Mammary epithelial cell (primary cell): ENCODE measurements at regions of chr7 and their contacts with region 1.

Region 1: GRCh38 chr7:93890464-93891068 is at the start of gene TFPI2:
- DNase-seq: peak; percentile 93
- H3K4me3 ChIP-seq: peak within 1 kb of the TSS; percentile 72 to 78 (median 77)
- H3K27ac ChIP-seq: peak within 1 kb of the TSS; percentile 48
- H3K4me1 ChIP-seq: peaks cover 6% of the 10 kb centered on the region
- H3K27me3 ChIP-seq: no peaks in the 10 kb centered on the region
- CTCF ChIP-seq: peak in 1 of 2 donors; percentile 11
- total RNA-seq, gene TFPI2: 0.33 to 608 TPM

Region 2: DNA sequence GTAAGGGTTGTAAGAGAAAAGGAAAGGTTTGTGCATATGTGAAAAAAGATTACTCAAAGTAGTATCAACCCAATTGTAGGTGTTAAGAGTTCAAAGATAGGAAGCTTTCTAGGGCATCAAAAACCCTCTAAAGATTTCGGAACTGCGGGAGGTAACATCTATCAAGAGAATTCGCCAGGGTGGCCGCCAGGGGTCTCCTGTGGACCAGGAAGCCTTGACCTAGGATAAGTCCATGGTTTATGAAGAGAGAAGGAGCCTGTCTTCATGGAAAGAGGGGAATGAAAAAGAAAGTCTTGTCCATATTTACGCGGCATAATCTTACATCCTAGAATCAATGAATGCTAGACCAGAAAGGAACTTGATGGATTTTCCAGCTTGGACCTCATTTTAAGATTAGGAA is 175.3 kb before region 1 on chr7:
- CTCF ChIA-PET with region 1: no interaction called
- dilution Hi-C with region 1: no loop called
- in situ Hi-C with region 1: no loop called
- intact Hi-C with region 1: loop called (anchors 5 kb)
- DNase-seq: peak; percentile 16
- H3K4me3 ChIP-seq: no peak overlapping the region
- H3K27ac ChIP-seq: no peak overlapping the region
- H3K4me1 ChIP-seq: peaks cover 18% of the 10 kb centered on the region
- H3K27me3 ChIP-seq: peaks cover 14% of the 10 kb centered on the region
- CTCF ChIP-seq: peak; percentile 57 to 62

Region 3: DNA sequence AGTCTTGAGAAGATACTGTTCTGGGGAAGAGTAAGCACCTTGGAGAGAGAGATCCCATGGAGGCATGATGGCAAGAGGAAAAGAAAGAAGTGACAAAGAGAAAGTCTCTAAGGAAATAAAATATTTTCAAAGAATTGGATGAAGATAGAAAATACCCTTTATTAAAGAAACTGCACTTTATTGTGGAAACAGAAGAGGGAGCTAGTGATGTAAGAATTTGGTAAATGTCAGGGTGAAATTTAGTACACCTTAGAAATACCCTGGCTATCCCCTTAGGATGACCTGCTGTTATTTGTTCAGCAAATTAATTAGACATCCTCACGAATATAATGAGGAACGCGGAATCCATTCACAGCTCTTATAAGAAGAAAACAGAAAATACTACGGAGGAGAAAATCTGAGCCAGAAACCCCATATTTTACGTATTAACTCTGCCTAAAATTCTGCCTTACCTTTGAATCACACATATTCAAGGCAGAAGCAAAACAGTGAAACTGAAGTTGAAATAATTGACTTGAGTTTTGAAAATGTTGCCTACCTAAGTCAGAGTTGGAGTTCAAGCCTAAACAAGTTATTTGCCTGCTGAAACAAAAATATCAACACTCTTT is 90.7 kb before region 1 on chr7:
- CTCF ChIA-PET with region 1: no interaction called
- dilution Hi-C with region 1: no loop called
- in situ Hi-C with region 1: no loop called
- intact Hi-C with region 1: loop called (anchors 1 kb)
- DNase-seq: peak; percentile 12
- H3K4me3 ChIP-seq: no peak overlapping the region
- H3K27ac ChIP-seq: no peak overlapping the region
- H3K4me1 ChIP-seq: no peaks in the 10 kb centered on the region
- H3K27me3 ChIP-seq: peaks cover under 1% of the 10 kb centered on the region
- CTCF ChIP-seq: peak; percentile 60 to 64

Region 4: GRCh38 chr7:93856323-93856722 is 34.2 kb before region 1 on chr7:
- CTCF ChIA-PET with region 1: no interaction called
- dilution Hi-C with region 1: loop called (anchors 5 kb)
- in situ Hi-C with region 1: no loop called
- intact Hi-C with region 1: loop called (anchors 5 kb)
- DNase-seq: peak; percentile 79
- H3K4me3 ChIP-seq: peak overlapping the region in 1 of 3 experiments; percentile 15
- H3K27ac ChIP-seq: peak overlapping the region; percentile 22
- H3K4me1 ChIP-seq: peaks cover 56% of the 10 kb centered on the region
- H3K27me3 ChIP-seq: no peaks in the 10 kb centered on the region
- CTCF ChIP-seq: no peak

Region 5: GRCh38 chr7:93861325-93861949 is 29.1 kb before region 1 on chr7:
- CTCF ChIA-PET with region 1: no interaction called
- dilution Hi-C with region 1: loop called (anchors 5 kb)
- in situ Hi-C with region 1: no loop called
- intact Hi-C with region 1: loop called (anchors 5 kb)
- DNase-seq: no peak
- H3K4me3 ChIP-seq: no peak overlapping the region
- H3K27ac ChIP-seq: no peak overlapping the region
- H3K4me1 ChIP-seq: peaks cover 45% of the 10 kb centered on the region
- H3K27me3 ChIP-seq: no peaks in the 10 kb centered on the region
- CTCF ChIP-seq: peak; percentile 12 to 15